Mammary epithelial cell (primary cell): ENCODE measurements at regions of chr3 and their contacts with region 1.

Region 1: GRCh38 chr3:179147873-179148615 is at the start of gene PIK3CA:
- DNase-seq: peak; percentile 98
- H3K4me3 ChIP-seq: peak within 1 kb of the TSS; percentile 92 to 94 (median 93)
- H3K27ac ChIP-seq: peak within 1 kb of the TSS; percentile 87
- H3K4me1 ChIP-seq: peaks cover 6% of the 10 kb centered on the region
- H3K27me3 ChIP-seq: no peaks in the 10 kb centered on the region
- CTCF ChIP-seq: no peak
- total RNA-seq, gene PIK3CA: 20.0 to 24.7 TPM

Region 2: GRCh38 chr3:179071550-179072397 is 76.3 kb before region 1 on chr3 and contains the start of gene ZMAT3:
- CTCF ChIA-PET with region 1: no interaction called
- dilution Hi-C with region 1: no loop called
- in situ Hi-C with region 1: no loop called
- intact Hi-C with region 1: loop called (anchors 1 kb)
- DNase-seq: peak; percentile 80
- H3K4me3 ChIP-seq: peak within 1 kb of the TSS; percentile 54 to 75 (median 74)
- H3K27ac ChIP-seq: peak within 1 kb of the TSS; percentile 94
- H3K4me1 ChIP-seq: peaks cover 22% of the 10 kb centered on the region
- H3K27me3 ChIP-seq: no peaks in the 10 kb centered on the region
- CTCF ChIP-seq: no peak
- total RNA-seq, gene ZMAT3: 31.3 to 56.2 TPM

Region 3: GRCh38 chr3:179260949-179261765 is 113.1 kb after region 1 on chr3:
- CTCF ChIA-PET with region 1: no interaction called
- dilution Hi-C with region 1: no loop called
- in situ Hi-C with region 1: no loop called
- intact Hi-C with region 1: loop called (anchors 5 kb)
- DNase-seq: peak; percentile 56
- H3K4me3 ChIP-seq: peak overlapping the region; percentile 53 to 57 (median 57)
- H3K27ac ChIP-seq: no peak overlapping the region
- H3K4me1 ChIP-seq: no peaks in the 10 kb centered on the region
- H3K27me3 ChIP-seq: no peaks in the 10 kb centered on the region
- CTCF ChIP-seq: no peak

Region 4: GRCh38 chr3:179322286-179323196 is 174.5 kb after region 1 on chr3 and contains the start of gene ZNF639:
- CTCF ChIA-PET with region 1: no interaction called
- dilution Hi-C with region 1: no loop called
- in situ Hi-C with region 1: loop called in 1 of 2 experiments (anchors 5 kb)
- intact Hi-C with region 1: no loop called
- DNase-seq: peak; percentile 67
- H3K4me3 ChIP-seq: peak within 1 kb of the TSS; percentile 79 to 96 (median 80)
- H3K27ac ChIP-seq: peak within 1 kb of the TSS; percentile 63
- H3K4me1 ChIP-seq: peaks cover 25% of the 10 kb centered on the region
- H3K27me3 ChIP-seq: no peaks in the 10 kb centered on the region
- CTCF ChIP-seq: peak; percentile 41 to 58
- total RNA-seq, gene ZNF639: 25.3 to 27.7 TPM

Region 5: GRCh38 chr3:179562591-179563270 is 414.7 kb after region 1 on chr3 and contains the start of gene ACTL6A:
- CTCF ChIA-PET with region 1: no interaction called
- dilution Hi-C with region 1: no loop called
- in situ Hi-C with region 1: no loop called
- intact Hi-C with region 1: loop called (anchors 1 kb)
- DNase-seq: peak; percentile 100
- H3K4me3 ChIP-seq: peak within 1 kb of the TSS; percentile 85 to 98 (median 96)
- H3K27ac ChIP-seq: peak within 1 kb of the TSS; percentile 72
- H3K4me1 ChIP-seq: peaks cover 15% of the 10 kb centered on the region
- H3K27me3 ChIP-seq: no peaks in the 10 kb centered on the region
- CTCF ChIP-seq: no peak
- total RNA-seq, gene ACTL6A: 41.5 to 59.4 TPM